ENCODE measurements at regions of chr2 and their contacts with region 1.

Region 1: DNA sequence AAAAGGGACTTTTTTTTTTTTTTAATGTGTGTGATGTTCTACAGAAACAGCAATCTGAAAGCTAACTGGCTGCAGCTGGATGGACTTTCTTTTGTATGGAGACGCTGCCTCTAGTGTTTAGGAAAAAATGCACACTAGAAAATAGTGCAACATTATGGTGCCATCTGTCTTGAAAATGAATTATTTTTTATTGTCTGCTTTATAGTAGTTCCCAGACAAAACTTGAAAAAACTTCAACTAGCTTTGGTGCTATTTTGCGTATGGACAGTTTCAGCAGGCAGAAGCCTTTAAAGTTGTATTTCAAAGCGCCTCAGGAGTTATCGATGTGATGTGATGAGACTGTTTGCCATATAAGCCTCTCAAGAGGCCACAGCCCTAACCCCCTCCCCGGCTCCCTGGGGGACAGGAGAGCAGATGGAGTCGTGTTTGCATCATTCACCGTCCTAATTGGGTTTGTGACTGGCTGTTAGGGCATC is 86.9 kb downstream of the LTBP1 start:
- DNase-seq: peak in 13 of 42 donors; percentile 15 to 62 (median 27)

Region 2: GRCh38 chr2:32772638-32773447 is 260.8 kb before region 1 on chr2:
- intact Hi-C with region 1: loop called (anchors 1 kb)
- DNase-seq: peak in 22 of 42 donors; percentile 5 to 67 (median 28)

Region 3: DNA sequence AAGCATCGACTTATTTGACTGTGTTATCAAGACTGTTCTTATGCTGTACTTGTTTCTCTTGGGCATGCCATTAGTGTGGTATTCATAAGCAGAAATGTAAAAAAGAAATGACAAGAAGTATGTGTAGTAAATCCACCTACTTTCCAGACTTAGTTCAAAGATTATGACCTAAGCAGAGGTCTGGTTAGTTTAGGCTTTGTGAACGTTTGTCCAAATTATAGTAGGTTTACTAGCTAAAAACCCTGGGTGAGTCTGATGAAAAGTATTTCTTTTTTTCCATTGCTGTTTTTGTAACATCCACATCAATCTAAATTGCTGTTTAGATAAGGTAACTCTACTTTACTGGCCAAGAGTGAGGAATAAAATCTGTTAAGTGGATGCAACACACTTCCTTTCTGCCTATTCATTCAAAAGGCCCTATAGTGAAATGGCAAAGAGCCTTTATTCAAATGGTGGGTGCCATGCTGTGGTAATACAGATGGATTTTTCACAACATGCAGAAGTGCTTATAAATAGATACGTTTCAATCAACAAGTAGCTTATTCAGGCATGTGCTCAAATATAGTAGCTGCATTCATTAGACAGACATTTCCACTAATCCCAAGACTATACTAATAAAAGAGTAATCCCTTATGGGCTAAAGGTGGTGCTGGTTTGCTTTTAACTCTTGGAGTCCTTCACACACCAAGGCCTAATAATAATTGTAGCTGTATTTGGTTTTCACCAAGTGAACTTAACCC is 209.4 kb before region 1 on chr2:
- intact Hi-C with region 1: no loop called
- DNase-seq: no peak

Region 4: GRCh38 chr2:33372940-33373553 is 339.4 kb after region 1 on chr2:
- intact Hi-C with region 1: loop called (anchors 10 kb)
- DNase-seq: peak in 15 of 42 donors; percentile 43 to 80 (median 53)

Region 5: GRCh38 chr2:33583194-33583938 is 549.7 kb after region 1 on chr2:
- intact Hi-C with region 1: loop called (anchors 10 kb)
- DNase-seq: peak in 28 of 42 donors; percentile 18 to 81 (median 53)

Region 6: GRCh38 chr2:33777786-33778185 is 744.1 kb after region 1 on chr2:
- intact Hi-C with region 1: no loop called
- DNase-seq: no peak

Measured in head of caudate nucleus (tissue), 42 donors.